ENCODE measurements at regions of chr19 and their contacts with region 1.

Region 1: GRCh38 chr19:1767464-1767933 is 14.2 kb downstream of the ONECUT3 start:
- DNase-seq: peak in 1 of 2 donors; percentile 37
- ATAC-seq: peak; percentile 58 to 77 (median 68)
- H3K4me3 ChIP-seq: no peak overlapping the region
- H3K27ac ChIP-seq: no peak overlapping the region
- H3K4me1 ChIP-seq: no peaks in the 10 kb centered on the region
- H3K27me3 ChIP-seq: peaks cover 2 to 94% (median 34%) of the 10 kb centered on the region in 3 donors
- CTCF ChIP-seq: peak; percentile 84

Region 2: GRCh38 chr19:1540365-1540925 is 227.1 kb before region 1 on chr19:
- intact Hi-C with region 1: loop called in 1 of 2 experiments (anchors 10 kb)
- DNase-seq: no peak
- ATAC-seq: peak in 1 of 4 donors; percentile 35
- H3K4me3 ChIP-seq: no peak overlapping the region
- H3K27ac ChIP-seq: no peak overlapping the region
- H3K4me1 ChIP-seq: no peaks in the 10 kb centered on the region
- H3K27me3 ChIP-seq: peaks cover 0 to 16% (median 2%) of the 10 kb centered on the region in 3 donors
- CTCF ChIP-seq: no peak

Region 3: DNA sequence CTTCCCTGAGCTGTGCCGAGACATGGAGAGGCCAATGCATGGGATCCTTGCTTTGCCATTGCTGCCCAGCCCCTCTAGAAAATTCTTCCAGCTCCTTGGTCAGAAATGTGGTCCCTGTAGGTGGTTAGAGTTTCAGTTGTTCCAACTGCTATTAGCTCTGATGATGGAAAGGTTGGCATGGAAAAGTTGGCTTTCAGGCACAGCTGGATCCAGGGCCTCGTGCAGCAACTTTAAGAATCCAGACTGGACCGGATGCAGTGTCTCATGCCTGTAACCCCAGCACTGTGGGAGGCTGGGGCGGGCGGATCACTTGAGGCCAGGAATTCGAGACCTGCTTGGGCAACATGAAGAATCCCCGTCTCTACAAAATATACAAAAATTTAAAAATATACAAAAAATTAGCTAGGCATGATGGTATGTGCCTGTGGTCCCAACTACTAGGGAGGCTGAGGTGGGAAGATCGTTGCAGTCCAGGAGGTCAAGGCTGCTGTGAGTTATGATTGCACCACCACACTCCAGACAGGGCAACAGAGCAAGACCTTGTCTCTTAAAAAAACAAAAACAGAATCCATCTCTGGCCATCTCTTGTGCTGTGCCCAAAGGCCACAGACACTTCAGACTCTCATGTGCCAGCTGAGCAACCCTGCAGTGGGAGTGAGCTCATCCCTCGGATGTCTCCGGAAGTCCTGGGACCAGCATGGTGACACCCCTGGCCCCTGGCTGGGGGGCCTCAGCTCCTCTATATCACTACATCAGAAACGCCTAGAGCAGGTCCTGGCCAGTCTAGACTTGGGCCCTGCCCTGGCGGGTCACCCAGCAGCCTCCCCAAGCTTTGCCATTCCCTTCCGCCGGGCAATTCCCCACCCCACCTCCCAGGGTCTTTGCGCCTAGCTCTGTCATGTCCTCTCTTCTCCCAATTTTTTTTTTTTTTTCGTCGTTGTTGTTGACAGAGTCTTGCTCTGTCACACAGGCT is 216.1 kb before region 1 on chr19:
- intact Hi-C with region 1: loop called (anchors 1 to 10 kb)
- DNase-seq: no peak
- ATAC-seq: no peak
- H3K4me3 ChIP-seq: no peak overlapping the region
- H3K27ac ChIP-seq: no peak overlapping the region
- H3K4me1 ChIP-seq: no peaks in the 10 kb centered on the region
- H3K27me3 ChIP-seq: no peaks in the 10 kb centered on the region
- CTCF ChIP-seq: no peak

Region 4: DNA sequence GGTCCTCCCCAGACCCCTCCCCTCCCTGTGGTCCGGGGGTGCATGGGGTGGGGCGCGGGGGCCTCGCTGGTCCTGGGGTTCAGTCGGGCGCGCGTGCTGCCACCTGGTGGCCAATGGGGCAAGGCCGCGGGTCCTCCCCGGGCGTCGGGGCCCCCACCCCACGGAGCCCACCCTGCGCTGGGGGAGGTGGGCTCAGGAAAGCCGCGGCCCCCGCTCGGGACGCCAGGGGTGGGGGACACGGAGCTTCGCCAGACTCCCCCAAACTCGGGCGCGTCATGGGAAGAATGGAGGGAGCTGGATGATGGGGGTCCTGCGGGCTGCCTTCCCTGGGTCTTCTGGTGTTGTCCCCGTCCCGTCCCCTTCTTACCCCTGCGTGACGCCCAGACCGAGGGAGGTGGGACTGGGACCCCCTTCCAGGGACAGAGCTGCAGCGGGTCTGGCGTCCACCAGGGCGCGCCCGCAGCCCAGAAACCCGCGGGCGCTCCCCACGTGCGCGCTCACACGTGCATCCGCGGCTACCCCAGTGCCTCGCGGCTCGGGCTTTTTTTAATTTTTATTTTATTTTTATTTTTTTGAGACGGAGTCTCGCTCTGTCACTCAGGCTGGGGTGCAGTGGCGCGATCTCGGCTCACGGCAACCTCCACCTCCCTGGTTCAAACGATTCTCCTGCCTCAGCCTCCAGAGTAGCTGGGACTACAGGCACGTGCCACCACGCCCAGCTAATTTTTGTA is 95.3 kb before region 1 on chr19:
- intact Hi-C with region 1: no loop called
- DNase-seq: no peak
- ATAC-seq: peak in 3 of 4 donors; percentile 53 to 72 (median 58)
- H3K4me3 ChIP-seq: peak overlapping the region; percentile 22
- H3K27ac ChIP-seq: no peak overlapping the region
- H3K4me1 ChIP-seq: peaks cover 8% of the 10 kb centered on the region
- H3K27me3 ChIP-seq: peaks cover 0 to 87% (median 32%) of the 10 kb centered on the region in 3 donors
- CTCF ChIP-seq: peak; percentile 71

Region 5: DNA sequence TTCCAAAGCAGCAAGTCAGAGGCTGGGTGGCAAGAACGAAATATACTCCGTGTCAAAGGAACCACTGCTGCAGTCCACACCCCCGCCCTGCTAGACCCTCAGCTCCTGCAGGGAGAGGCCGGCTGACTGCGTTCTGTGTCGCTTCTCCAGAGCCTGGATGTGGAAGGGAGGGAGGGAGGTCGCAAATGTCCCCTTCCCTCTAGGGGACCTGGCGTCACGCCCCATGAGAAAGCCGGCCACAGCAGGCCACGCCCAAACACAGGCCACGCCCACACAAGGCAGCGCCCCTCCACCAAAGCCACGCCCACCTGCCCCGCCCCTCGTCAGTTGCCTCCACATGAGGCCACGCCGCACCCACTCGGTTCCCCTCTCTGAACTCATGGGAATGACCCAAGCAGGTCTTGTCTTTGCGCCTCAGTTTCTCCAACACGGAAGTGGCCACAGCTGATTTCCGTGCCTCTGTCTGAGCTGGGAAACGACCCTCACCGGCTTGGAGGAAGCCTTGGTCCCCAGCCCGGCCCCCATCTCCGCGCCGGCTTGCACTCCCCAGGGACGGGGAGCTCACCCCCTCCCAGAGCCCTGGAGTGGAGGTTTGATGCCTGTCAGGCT is 76.7 kb before region 1 on chr19:
- intact Hi-C with region 1: loop called in 1 of 2 experiments (anchors 5 kb)
- DNase-seq: no peak
- ATAC-seq: peak in 2 of 4 donors; percentile 42 to 60
- H3K4me3 ChIP-seq: no peak overlapping the region
- H3K27ac ChIP-seq: no peak overlapping the region
- H3K4me1 ChIP-seq: no peaks in the 10 kb centered on the region
- H3K27me3 ChIP-seq: peaks cover 0 to 75% (median 33%) of the 10 kb centered on the region in 3 donors
- CTCF ChIP-seq: no peak

Region 6: DNA sequence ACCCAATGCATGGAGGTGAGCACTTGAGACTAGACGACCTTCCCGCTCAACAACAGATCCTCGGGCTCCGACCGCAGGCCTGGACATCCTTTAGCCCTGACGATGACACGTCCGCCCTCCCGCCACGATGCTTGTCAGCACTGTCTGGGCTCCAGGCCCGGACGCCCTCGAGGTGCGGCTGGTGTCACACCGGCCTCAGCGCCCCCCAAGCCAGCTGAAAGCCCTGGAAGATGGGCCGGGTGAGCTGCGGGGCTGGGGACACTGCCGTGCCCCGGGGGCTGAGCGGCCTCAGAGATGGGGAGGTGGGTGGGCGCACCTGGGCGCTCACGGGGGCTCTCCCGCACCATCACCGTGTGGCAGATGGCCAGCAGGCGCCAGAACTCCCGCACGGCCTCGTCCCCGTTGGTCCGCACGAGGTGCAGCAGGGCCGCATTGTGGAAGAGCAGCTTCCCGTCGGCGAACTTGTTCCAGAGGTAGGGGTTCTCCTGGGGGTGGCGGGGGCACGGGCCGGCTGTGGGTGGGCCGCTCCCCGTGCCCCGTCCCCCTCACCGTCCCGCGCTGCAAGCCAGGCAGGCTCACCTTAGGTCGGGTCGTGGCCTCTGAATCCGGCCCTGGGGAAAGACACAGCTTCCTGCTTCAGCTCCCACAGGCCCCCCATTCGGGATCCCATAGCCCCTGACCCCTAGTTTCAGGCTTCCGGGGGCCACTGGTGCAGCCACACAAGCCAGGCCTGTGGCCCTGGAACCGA is 29.1 kb after region 1 on chr19:
- intact Hi-C with region 1: no loop called
- DNase-seq: no peak
- ATAC-seq: no peak
- H3K4me3 ChIP-seq: no peak overlapping the region
- H3K27ac ChIP-seq: no peak overlapping the region
- H3K4me1 ChIP-seq: no peaks in the 10 kb centered on the region
- H3K27me3 ChIP-seq: peaks cover 0 to 31% (median 3%) of the 10 kb centered on the region in 3 donors
- CTCF ChIP-seq: no peak